WTC11 (cell line): ENCODE measurements at regions of chr20 and their contacts with region 1.

Region 1: GRCh38 chr20:44217342-44218092 is 6.9 kb upstream of the OSER1 start:
- DNase-seq: peak; percentile 82
- ATAC-seq: peak; percentile 84
- H3K4me3 Mint-ChIP-seq: no peak overlapping the region
- H3K27ac Mint-ChIP-seq: peak overlapping the region; percentile 58; the same call in 1 of the 2 replicates
- H3K4me1 Mint-ChIP-seq: peaks cover 21% of the 10 kb centered on the region
- H3K27me3 Mint-ChIP-seq: no peaks in the 10 kb centered on the region
- CTCF ChIP-seq: peak; percentile 91

Region 2: GRCh38 chr20:44247586-44248409 is 30.3 kb after region 1 on chr20:
- CTCF ChIA-PET with region 1: interaction called, 25 read pairs
- POLR2A ChIA-PET with region 1: no interaction called
- DNase-seq: peak; percentile 91
- ATAC-seq: peak; percentile 92
- H3K4me3 Mint-ChIP-seq: peak overlapping the region; percentile 78
- H3K27ac Mint-ChIP-seq: no peak overlapping the region
- H3K4me1 Mint-ChIP-seq: peaks cover 7% of the 10 kb centered on the region; the same call in 1 of the 2 replicates
- H3K27me3 Mint-ChIP-seq: peaks cover 13% of the 10 kb centered on the region
- CTCF ChIP-seq: peak; percentile 55; the same call in 1 of the 2 replicates

Region 3: DNA sequence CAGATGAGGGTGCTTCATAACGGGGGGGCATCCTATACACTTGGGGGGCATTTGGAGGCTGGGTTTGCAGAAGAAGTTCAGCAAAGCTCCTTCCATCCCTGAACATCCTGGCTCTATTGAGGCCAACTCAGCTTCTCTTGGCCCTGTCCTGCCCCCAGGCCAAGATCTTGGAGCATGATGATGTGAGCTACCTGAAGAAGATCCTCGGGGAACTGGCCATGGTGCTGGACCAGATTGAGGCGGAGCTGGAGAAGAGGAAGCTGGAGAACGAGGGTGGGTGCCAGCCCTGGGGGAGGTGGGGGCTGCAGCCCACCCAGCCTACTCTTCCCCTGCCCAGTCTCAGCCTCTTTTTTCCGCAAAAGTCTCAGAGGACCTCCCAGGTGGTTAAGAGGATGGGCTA is 46.8 kb after region 1 on chr20:
- CTCF ChIA-PET with region 1: interaction called, 14 read pairs
- POLR2A ChIA-PET with region 1: no interaction called
- DNase-seq: peak; percentile 49
- ATAC-seq: no peak; the same call in 1 of the 2 replicates
- H3K4me3 Mint-ChIP-seq: no peak overlapping the region
- H3K27ac Mint-ChIP-seq: no peak overlapping the region
- H3K4me1 Mint-ChIP-seq: no peaks in the 10 kb centered on the region
- H3K27me3 Mint-ChIP-seq: no peaks in the 10 kb centered on the region
- CTCF ChIP-seq: no peak

Region 4: GRCh38 chr20:44394702-44395460 is 177.4 kb after region 1 on chr20:
- CTCF ChIA-PET with region 1: interaction called, 40 read pairs
- POLR2A ChIA-PET with region 1: no interaction called
- DNase-seq: no peak
- ATAC-seq: no peak
- H3K4me3 Mint-ChIP-seq: no peak overlapping the region
- H3K27ac Mint-ChIP-seq: no peak overlapping the region
- H3K4me1 Mint-ChIP-seq: no peaks in the 10 kb centered on the region
- H3K27me3 Mint-ChIP-seq: peaks cover under 1% of the 10 kb centered on the region; the same call in 1 of the 2 replicates
- CTCF ChIP-seq: no peak